PC-9 (cell line): ENCODE measurements at regions of chr22 and their contacts with region 1.

Region 1: DNA sequence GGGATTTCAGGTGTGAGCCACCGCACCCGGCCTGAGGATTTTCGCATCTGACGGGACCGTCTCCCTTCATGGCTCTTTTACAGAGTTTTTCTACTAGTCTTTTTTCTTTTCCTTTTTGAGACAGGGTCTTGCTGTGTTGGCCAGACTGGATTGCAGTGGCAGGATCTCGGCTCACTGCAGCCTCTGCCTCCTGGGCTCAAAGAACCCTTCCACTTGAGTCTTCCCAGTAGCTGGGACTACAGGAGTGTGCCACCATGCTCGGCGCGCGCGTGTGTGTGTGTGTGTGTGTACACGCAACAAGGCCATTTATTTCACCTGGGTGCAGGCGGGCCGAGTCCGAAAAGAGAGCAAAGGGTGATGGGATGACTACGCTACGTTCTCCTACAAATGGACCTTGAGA is 10.9 kb downstream of the SERHL2 start:
- DNase-seq: no peak
- H3K4me3 ChIP-seq: no peak overlapping the region
- H3K27ac ChIP-seq: no peak overlapping the region
- H3K4me1 ChIP-seq: no peaks in the 10 kb centered on the region
- H3K27me3 ChIP-seq: no peaks in the 10 kb centered on the region
- CTCF ChIP-seq: no peak

Region 2: DNA sequence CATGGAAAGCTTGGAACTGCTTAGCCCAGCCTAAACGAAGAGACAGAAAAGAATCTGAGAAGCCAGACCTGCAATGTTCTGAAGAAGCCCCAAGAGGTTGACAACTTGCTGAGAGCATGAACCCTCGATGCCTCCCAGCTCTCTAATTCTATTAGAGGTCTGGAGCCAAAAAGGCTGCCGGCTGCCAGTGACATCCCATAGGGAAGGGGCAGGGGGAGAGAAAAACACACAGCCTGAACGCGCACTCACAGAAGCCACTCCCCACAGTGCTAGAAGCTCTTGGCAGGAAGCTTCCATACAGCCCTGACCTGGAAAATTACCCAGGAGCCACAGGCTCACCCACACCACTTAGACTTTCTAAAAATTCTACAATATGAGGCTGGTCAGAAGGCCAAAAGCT is 31.6 kb after region 1 on chr22:
- CTCF ChIA-PET with region 1: no interaction called
- POLR2A ChIA-PET with region 1: interaction called, 10 read pairs
- intact Hi-C with region 1: no loop called
- DNase-seq: no peak
- H3K4me3 ChIP-seq: no peak overlapping the region
- H3K27ac ChIP-seq: no peak overlapping the region
- H3K4me1 ChIP-seq: no peaks in the 10 kb centered on the region
- H3K27me3 ChIP-seq: no peaks in the 10 kb centered on the region
- CTCF ChIP-seq: no peak